A549 (cell line): ENCODE measurements at regions of chr1 and their contacts with region 1.

Region 1: GRCh38 chr1:119743781-119744597 is 24.7 kb downstream of the HMGCS2 start:
- DNase-seq: peak; percentile 56 to 60
- ATAC-seq: peak; percentile 70 to 93; a peak in 5 of 6 replicates
- H3K4me3 ChIP-seq: no peak overlapping the region
- H3K27ac ChIP-seq: no peak overlapping the region
- H3K4me1 ChIP-seq: no peaks in the 10 kb centered on the region
- CTCF ChIP-seq: peak; percentile 59
- EP300 ChIP-seq: no peak
- POLR2A ChIP-seq: no peak
- RAD21 ChIP-seq: peak; percentile 44 to 59; a peak in 3 of 5 replicates

Region 2: DNA sequence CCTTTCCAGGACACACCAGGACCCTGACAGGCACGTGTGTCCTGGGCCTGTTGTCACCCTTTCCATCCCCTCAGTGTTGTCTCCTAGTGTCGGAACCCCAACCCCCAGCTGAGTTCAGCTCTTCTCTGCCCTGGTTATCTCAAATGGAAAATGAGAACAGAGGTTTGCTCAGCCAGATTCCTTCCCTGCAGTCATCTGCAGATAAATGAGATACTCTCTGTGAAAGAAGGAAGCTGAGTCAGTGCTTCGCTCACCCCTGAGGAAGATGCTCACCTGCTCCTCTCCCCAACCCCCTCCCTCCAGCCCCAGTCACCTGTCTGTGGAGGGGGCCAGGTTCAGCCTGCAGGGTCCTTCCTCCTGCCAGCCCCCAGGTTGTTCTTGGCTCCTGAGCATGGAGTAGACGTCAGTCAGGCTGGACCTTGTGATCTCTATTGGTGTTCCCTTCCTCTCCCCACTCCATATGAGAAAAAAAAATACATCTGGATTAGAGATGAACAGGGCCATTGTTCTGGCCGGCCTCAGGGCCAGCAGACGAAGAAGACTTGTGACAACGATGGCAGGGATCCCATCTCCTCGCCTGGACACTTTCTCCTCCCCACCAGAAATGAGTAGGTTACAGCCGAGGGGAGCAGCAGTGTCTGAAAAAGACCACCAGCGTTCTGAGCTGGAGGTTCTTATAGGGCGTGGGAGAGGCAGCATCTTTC is 11.4 kb before region 1 on chr1:
- CTCF ChIA-PET with region 1: interaction called, 32 read pairs
- POLR2A ChIA-PET with region 1: no interaction called
- DNase-seq: no peak
- ATAC-seq: no peak
- H3K4me3 ChIP-seq: no peak overlapping the region
- H3K27ac ChIP-seq: no peak overlapping the region
- H3K4me1 ChIP-seq: no peaks in the 10 kb centered on the region
- CTCF ChIP-seq: no peak
- EP300 ChIP-seq: no peak
- POLR2A ChIP-seq: no peak
- RAD21 ChIP-seq: no peak